ENCODE measurements at regions of chr15 and their contacts with region 1.

Region 1: GRCh38 chr15:90716976-90717821 is at the start of gene BLM:
- DNase-seq: peak; percentile 99
- H3K4me3 Mint-ChIP-seq: peak within 1 kb of the TSS; percentile 88
- H3K27ac Mint-ChIP-seq: peak within 1 kb of the TSS; percentile 96
- H3K4me1 Mint-ChIP-seq: peaks cover 27% of the 10 kb centered on the region
- H3K27me3 Mint-ChIP-seq: no peaks in the 10 kb centered on the region
- total RNA-seq, gene BLM: 64.1 and 66.4 TPM in 2 replicates

Region 2: GRCh38 chr15:90550919-90551318 is 166.3 kb before region 1 on chr15:
- intact Hi-C with region 1: no loop called
- DNase-seq: no peak
- H3K4me3 Mint-ChIP-seq: no peak overlapping the region
- H3K27ac Mint-ChIP-seq: no peak overlapping the region
- H3K4me1 Mint-ChIP-seq: peaks cover 41% of the 10 kb centered on the region
- H3K27me3 Mint-ChIP-seq: no peaks in the 10 kb centered on the region

Region 3: GRCh38 chr15:90686435-90687218 is 30.6 kb before region 1 on chr15:
- intact Hi-C with region 1: loop called (anchors 1 kb)
- DNase-seq: peak; percentile 87
- H3K4me3 Mint-ChIP-seq: peak overlapping the region; percentile 58
- H3K27ac Mint-ChIP-seq: peak overlapping the region; percentile 96
- H3K4me1 Mint-ChIP-seq: peaks cover 47% of the 10 kb centered on the region
- H3K27me3 Mint-ChIP-seq: no peaks in the 10 kb centered on the region

Region 4: GRCh38 chr15:90735923-90736322 is 18.7 kb after region 1 on chr15:
- intact Hi-C with region 1: no loop called
- DNase-seq: peak; percentile 51
- H3K4me3 Mint-ChIP-seq: peak overlapping the region; percentile 43
- H3K27ac Mint-ChIP-seq: no peak overlapping the region
- H3K4me1 Mint-ChIP-seq: peaks cover 41% of the 10 kb centered on the region
- H3K27me3 Mint-ChIP-seq: no peaks in the 10 kb centered on the region

Measured in activated CD4-positive, alpha-beta T cell treated with anti-CD3 and anti-CD28 coated beads, Interleukin-2, amount 10 ng/mL, durations not matched to agents 24 days and 14 days (primary cell).